Lower leg skin (tissue), 4 donors: ENCODE measurements at regions of chr10 and their contacts with region 1.

Region 1: DNA sequence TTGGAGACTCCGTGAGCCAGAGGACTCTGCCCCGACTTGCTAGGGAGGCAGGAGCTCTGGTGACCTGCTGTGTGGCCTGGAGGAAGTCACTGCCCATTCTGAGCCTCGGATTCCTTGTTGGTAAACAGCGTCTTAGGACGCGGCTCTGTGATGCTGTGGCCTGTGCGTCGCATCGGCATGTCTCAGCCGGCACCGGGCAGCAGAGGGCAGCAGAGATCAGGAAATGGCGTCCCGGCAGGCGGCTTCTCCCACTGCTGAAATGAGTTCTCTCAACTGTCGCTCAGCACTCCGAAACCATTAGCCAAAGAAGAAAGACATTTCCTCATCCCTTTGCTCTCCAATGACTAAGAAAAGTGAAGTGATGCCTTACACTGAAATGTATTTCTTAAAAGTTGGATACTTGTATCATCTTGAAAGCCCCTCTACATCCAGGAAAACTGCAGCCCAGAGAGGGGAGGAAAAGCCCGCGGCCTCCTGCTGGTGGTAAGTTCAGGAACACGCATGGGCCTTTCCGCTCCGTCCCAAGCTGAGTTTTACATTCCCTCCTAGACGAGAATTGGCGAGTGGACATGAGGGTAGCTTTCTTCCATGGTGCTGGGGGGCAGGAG is 91.7 kb downstream of the WDR11 start:
- DNase-seq: peak; percentile 72 to 96
- H3K4me3 ChIP-seq: no peak overlapping the region
- CTCF ChIP-seq: no peak
- POLR2A ChIP-seq: no peak

Region 2: DNA sequence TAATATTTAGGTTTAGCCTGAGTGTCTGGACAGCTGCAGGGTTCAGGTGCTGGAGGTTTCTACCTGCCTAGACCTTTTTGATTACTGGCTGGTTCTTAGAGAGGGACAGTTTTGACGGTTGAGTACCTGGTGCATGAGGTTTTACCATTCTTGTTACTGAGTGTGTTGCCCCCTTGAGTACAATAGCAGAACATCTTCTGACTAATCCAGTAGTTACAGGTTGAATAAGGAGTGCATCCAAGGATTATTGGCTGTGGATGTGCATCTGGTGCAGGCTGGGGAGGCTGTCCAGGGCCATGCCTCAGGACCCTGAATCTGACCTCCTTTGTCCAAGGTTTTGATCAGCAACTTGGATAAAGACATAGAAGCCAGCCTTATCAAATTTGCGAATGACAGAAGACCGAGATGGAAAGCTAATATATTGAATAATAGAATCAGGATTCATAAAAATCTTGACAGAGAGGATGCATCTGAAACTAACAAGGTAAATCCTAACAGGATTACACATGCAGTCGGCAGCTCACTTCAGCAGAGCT is 462.8 kb before region 1 on chr10:
- intact Hi-C with region 1: no loop called
- DNase-seq: no peak
- H3K4me3 ChIP-seq: no peak overlapping the region
- CTCF ChIP-seq: no peak
- POLR2A ChIP-seq: no peak

Region 3: GRCh38 chr10:120873734-120874133 is 69.2 kb before region 1 on chr10:
- intact Hi-C with region 1: no loop called
- DNase-seq: no peak
- H3K4me3 ChIP-seq: no peak overlapping the region
- CTCF ChIP-seq: no peak
- POLR2A ChIP-seq: no peak

Region 4: DNA sequence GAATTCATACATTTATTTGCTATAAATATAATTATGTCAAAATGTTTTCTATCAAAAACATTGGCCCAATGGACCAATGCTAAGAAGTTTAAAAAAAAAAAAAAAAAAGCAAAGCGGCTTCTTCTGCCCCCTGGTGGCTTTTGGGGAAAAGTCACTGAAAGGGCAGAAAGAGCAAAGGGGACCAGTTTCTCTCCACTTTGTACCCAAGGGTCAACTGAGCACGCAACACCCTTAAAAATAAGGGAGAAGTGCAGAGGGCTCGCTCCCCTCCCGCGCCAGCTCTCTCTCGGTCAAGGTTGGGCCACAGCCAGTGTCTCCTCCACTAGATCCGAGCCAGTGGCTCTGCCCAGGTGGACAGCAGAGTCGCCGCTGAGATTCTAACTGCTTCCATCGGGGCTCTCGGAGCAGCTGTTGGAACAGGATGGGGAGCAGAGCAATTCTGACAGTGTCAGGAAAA is 791.7 kb after region 1 on chr10:
- intact Hi-C with region 1: loop called (anchors 5 kb)
- DNase-seq: no peak
- H3K4me3 ChIP-seq: no peak overlapping the region
- CTCF ChIP-seq: no peak
- POLR2A ChIP-seq: no peak

Region 5: DNA sequence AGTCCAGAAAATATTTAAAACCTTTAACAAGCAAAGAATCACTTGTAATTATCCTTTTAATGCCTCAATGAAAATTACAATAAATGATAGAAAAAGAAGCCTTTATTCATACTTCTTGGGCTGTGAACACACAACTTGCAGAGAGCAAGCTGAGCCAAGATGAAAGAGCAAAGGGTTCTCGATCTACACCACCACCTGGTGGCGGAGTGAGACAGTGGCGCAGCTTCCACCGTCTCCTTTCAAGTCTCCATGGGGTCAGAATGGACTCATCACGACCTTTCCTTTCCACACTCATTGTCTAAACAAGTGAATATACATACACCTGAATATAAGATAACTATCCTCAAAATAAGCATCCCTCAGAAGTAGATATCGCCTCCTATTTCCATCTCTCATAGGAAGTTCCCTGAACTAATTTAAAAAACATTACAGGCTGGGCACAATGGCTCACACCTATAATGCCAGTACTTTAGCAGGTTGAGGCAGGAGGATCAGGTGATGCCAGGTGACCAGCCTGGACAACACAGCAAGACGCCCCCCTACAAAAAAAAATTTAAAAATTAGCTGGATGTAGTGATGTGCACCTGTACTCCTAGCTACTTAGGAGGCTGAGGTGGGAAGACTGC is 944.2 kb after region 1 on chr10:
- intact Hi-C with region 1: loop called (anchors 5 kb)
- DNase-seq: peak; percentile 36 to 87
- H3K4me3 ChIP-seq: no peak overlapping the region
- CTCF ChIP-seq: no peak
- POLR2A ChIP-seq: no peak